Left ventricle myocardium inferior (tissue), 1 donor: ENCODE measurements at regions of chr3 and their contacts with region 1.

Region 1: DNA sequence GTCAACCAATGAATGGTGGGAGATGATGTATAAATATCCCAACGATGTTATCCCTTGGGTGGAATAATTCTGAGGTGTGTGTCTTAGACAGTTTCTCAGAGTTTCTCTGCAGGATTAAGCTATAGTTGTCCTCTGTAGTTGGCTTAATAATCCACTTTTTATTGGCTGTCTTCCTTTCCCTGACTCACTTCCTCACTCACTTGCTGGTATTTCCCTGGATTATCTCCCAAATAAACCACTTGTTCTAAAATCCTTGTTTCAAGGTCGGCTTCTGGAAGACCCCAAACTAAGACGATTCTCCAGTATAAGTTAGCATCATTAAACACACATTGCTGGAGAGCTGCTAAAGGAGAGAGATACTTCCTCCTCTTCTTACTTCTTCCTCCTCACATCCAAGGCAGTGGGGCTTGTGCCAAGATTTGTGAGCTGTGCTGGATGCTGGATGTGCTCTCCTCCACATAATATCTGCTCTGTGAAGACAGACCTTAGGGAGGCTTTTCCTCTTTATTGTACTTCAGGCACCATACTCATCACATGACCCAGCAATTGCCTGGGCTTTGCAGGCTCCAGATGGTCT is 22.5 kb upstream of the ROPN1 start:
- DNase-seq: no peak
- H3K4me3 ChIP-seq: no peak overlapping the region
- H3K27ac ChIP-seq: no peak overlapping the region
- H3K4me1 ChIP-seq: no peaks in the 10 kb centered on the region
- H3K27me3 ChIP-seq: no peaks in the 10 kb centered on the region
- CTCF ChIP-seq: no peak

Region 2: DNA sequence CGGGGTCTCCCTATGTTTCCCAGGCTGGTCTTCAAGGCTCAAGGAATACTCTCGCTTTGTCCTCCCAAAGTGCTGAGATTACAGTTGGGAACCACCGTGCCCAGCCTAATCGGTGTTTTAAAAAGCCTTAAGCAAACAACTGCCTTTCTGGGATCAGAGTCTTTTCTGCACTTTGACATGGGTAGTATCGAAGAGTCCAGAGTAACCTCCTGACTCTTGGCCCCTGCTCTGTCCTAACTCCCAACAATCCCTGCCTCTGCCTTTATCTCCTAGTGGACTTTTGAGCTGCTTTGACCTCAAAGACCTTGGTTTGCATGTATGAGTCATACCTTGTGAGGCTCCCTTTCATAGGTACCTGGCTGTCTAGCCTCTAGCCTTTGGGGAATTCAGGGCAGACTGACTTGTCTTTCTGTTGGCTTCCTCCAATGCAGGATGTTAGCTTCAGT is 408.6 kb before region 1 on chr3:
- intact Hi-C with region 1: no loop called
- DNase-seq: no peak
- H3K4me3 ChIP-seq: no peak overlapping the region
- H3K27ac ChIP-seq: no peak overlapping the region
- H3K4me1 ChIP-seq: peaks cover 6% of the 10 kb centered on the region
- H3K27me3 ChIP-seq: no peaks in the 10 kb centered on the region
- CTCF ChIP-seq: no peak

Region 3: GRCh38 chr3:124078953-124079911 is 64.8 kb after region 1 on chr3:
- intact Hi-C with region 1: loop called (anchors 5 kb)
- DNase-seq: no peak
- H3K4me3 ChIP-seq: no peak overlapping the region
- H3K27ac ChIP-seq: peak overlapping the region; percentile 41
- H3K4me1 ChIP-seq: peaks cover 54% of the 10 kb centered on the region
- H3K27me3 ChIP-seq: no peaks in the 10 kb centered on the region
- CTCF ChIP-seq: peak; percentile 87

Region 4: DNA sequence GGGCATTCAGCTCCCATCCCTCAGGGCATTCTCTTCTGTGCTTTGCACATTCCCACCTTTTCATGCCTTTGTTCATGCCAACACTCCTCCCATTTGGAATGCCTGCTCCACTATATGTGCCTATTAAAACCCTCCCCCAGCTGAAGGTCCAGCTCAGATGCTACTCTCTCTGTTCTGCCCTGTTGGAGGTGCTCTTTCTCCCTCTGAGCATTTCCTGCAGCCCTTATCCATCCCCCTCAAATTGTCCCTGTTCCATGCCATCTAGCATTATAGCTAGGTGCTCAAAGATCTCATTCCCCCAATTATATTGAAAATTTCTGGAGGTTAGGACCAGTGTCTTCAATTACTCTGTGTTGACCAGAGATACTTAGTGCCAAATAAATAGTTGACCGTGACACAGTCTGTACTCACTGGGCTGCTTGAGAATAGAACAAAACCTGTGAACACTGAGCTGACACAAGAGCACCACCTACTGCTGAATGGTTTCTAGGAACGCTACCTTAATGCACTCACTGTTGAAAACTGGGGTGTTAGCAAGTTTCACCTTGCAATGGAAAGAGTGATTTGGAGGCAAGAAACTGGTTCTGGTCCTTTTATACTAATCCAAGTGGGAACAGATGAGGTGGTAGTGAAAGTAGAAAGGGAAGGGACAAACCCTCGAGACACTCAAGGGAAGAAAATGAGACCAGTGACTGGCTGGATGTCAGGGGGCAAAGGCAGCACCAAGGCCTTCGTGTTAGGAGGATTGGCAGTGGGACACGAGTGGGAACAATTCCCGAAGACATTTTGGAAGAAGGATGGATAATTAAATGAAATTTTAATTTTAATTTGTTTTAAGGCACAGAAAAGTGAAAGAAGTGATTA is 267.2 kb after region 1 on chr3:
- intact Hi-C with region 1: loop called (anchors 5 kb)
- DNase-seq: no peak
- H3K4me3 ChIP-seq: no peak overlapping the region
- H3K27ac ChIP-seq: no peak overlapping the region
- H3K4me1 ChIP-seq: peaks cover 66% of the 10 kb centered on the region
- H3K27me3 ChIP-seq: no peaks in the 10 kb centered on the region
- CTCF ChIP-seq: peak; percentile 76

Region 5: GRCh38 chr3:124467980-124468902 is 453.8 kb after region 1 on chr3:
- intact Hi-C with region 1: loop called (anchors 10 kb)
- DNase-seq: no peak
- H3K4me3 ChIP-seq: no peak overlapping the region
- H3K27ac ChIP-seq: no peak overlapping the region
- H3K4me1 ChIP-seq: no peaks in the 10 kb centered on the region
- H3K27me3 ChIP-seq: no peaks in the 10 kb centered on the region
- CTCF ChIP-seq: peak; percentile 99